ENCODE measurements at regions of chr19 and their contacts with region 1.

Region 1: GRCh38 chr19:39502640-39503417 is 4.1 kb downstream of the DLL3 start:
- DNase-seq: peak; percentile 94 to 97
- ATAC-seq: peak in 1 of 2 experiments; percentile 39; a peak in 4 of 6 replicates
- H3K4me3 ChIP-seq: peak overlapping the region; percentile 16; the same call in 1 of the 3 replicates
- H3K27ac ChIP-seq: peak overlapping the region; percentile 6 to 57; a peak in 2 of 6 replicates
- H3K4me1 ChIP-seq: peaks cover 25% of the 10 kb centered on the region
- CTCF ChIP-seq: peak; percentile 99
- EP300 ChIP-seq: no peak
- POLR2A ChIP-seq: no peak
- RAD21 ChIP-seq: peak in 1 of 2 experiments; percentile 58; a peak in 4 of 5 replicates

Region 2: GRCh38 chr19:39351537-39352064 is 151.2 kb before region 1 on chr19:
- CTCF ChIA-PET with region 1: no interaction called
- POLR2A ChIA-PET with region 1: no interaction called
- DNase-seq: peak in 1 of 2 experiments; percentile 42
- ATAC-seq: no peak
- H3K4me3 ChIP-seq: no peak overlapping the region
- H3K27ac ChIP-seq: no peak overlapping the region
- H3K4me1 ChIP-seq: peaks cover 6% of the 10 kb centered on the region; the same call in 1 of the 3 replicates
- CTCF ChIP-seq: no peak
- EP300 ChIP-seq: 0 out of 5 replicates have a peak, but pooled peaks of 1 of the 2 experiments have one; percentile 18
- POLR2A ChIP-seq: no peak
- RAD21 ChIP-seq: no peak

Region 3: DNA sequence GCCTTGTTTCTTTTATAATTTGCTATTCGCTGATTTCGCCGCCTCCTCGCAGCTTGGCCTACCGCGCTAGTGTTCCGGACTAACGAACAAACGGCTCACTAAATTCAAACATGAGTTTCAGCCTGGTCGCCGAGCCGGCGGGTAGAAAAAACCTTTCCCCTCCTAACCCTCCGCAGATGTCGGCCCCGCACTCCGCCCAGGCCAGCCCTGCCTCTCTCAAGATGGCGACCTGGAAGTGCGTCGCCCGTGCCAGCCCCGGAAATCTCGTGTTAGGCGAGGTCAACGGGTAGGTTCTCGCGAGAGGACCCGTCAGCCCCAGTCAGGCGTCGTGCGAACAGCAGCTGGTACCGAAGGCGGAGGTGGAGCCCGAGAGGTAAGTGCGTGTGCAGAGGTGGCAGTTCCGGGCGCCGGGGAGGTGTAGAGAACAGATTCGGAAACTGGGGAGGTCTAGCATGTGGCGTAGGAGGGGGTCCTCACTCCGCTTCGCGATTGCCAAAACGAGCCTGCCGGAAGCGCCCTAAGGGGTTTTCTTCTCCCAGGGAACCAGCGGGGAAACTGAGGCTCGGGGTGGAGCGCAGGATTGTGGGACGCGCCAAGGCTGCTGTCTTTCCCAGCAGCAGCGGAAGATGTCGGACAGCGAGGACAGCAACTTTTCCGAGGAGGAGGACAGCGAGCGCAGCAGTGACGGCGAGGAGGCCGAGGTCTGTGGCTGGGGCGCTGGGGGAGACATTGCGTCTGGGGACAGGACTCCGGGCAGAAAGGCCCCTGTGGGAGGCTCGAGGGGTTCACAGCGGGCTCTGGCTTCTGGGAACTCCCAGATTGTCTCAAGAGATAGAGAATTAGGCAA is 57.3 kb before region 1 on chr19 and contains the start of gene SUPT5H:
- CTCF ChIA-PET with region 1: interaction called, 59 read pairs
- POLR2A ChIA-PET with region 1: interaction called, 6 read pairs
- DNase-seq: peak; percentile 100
- ATAC-seq: peak; percentile 94 to 97
- H3K4me3 ChIP-seq: peak within 1 kb of the TSS; percentile 80
- H3K27ac ChIP-seq: peak within 1 kb of the TSS; percentile 86 to 90
- H3K4me1 ChIP-seq: peaks cover 28% of the 10 kb centered on the region
- CTCF ChIP-seq: no peak
- EP300 ChIP-seq: no peak
- POLR2A ChIP-seq: peak; percentile 94
- RAD21 ChIP-seq: no peak
- polyA plus RNA-seq, gene SUPT5H: 133 and 186 TPM in 2 replicates

Region 4: DNA sequence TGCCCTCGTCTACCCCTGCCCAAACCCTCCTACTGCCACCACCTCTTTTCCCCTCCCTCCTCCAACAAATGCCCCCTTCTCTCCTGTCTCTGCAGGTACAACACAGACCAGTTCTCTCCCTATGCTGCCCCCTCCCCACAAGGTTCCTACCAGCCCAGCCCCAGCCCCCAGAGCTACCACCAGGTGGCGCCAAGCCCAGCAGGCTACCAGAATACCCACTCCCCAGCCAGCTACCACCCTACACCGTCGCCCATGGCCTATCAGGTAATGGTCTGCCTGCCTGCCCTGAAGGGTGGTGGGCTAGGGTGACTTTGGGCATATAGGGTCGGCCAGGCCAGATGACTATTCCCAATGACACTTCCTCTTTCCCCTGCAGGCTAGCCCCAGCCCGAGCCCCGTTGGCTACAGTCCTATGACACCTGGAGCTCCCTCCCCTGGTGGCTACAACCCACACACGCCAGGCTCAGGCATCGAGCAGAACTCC is 28.6 kb before region 1 on chr19:
- CTCF ChIA-PET with region 1: interaction called, 305 read pairs
- POLR2A ChIA-PET with region 1: no interaction called
- DNase-seq: peak; percentile 64 to 89
- ATAC-seq: peak; percentile 58 to 87; a peak in 5 of 6 replicates
- H3K4me3 ChIP-seq: no peak overlapping the region
- H3K27ac ChIP-seq: no peak overlapping the region
- H3K4me1 ChIP-seq: peaks cover 13% of the 10 kb centered on the region
- CTCF ChIP-seq: peak; percentile 97
- EP300 ChIP-seq: no peak
- POLR2A ChIP-seq: no peak
- RAD21 ChIP-seq: peak; percentile 61 to 69; a peak in 4 of 5 replicates

Region 5: GRCh38 chr19:39514840-39515550 is 12.2 kb after region 1 on chr19 and contains the start of gene SELENOV:
- CTCF ChIA-PET with region 1: interaction called, 71 read pairs
- POLR2A ChIA-PET with region 1: no interaction called
- DNase-seq: no peak
- ATAC-seq: peak; percentile 48 to 64
- H3K4me3 ChIP-seq: peak within 1 kb of the TSS; percentile 42
- H3K27ac ChIP-seq: peak within 1 kb of the TSS in 1 of 2 experiments; percentile 66; a peak in 3 of 6 replicates
- H3K4me1 ChIP-seq: peaks cover 9% of the 10 kb centered on the region; the same call in 2 of the 3 replicates
- CTCF ChIP-seq: 0 out of 3 replicates have a peak, but pooled peaks have one; percentile 6
- EP300 ChIP-seq: no peak
- POLR2A ChIP-seq: no peak
- RAD21 ChIP-seq: 0 out of 5 replicates have a peak, but pooled peaks of 1 of the 2 experiments have one; percentile 10
- polyA plus RNA-seq, gene SELENOV: not detected in 2 replicates

Region 6: GRCh38 chr19:39539519-39540332 is 36.9 kb after region 1 on chr19 and contains the start of gene EID2:
- CTCF ChIA-PET with region 1: interaction called, 259 read pairs
- POLR2A ChIA-PET with region 1: no interaction called
- DNase-seq: peak; percentile 99
- ATAC-seq: peak; percentile 93 to 98
- H3K4me3 ChIP-seq: peak within 1 kb of the TSS; percentile 68
- H3K27ac ChIP-seq: peak within 1 kb of the TSS; percentile 88 to 89
- H3K4me1 ChIP-seq: peaks cover 15% of the 10 kb centered on the region
- CTCF ChIP-seq: peak; percentile 90
- EP300 ChIP-seq: no peak
- POLR2A ChIP-seq: peak; percentile 98
- RAD21 ChIP-seq: peak; percentile 71 to 72
- polyA plus RNA-seq, gene EID2: 23.2 and 26.1 TPM in 2 replicates

Measured in A549 (cell line).